ENCODE measurements at regions of chr17 and their contacts with region 1.

Region 1: GRCh38 chr17:8941520-8941919 is 24.0 kb downstream of the PIK3R5 start:
- DNase-seq: no peak

Region 2: GRCh38 chr17:7572588-7573323 is 1368.8 kb before region 1 on chr17:
- intact Hi-C with region 1: loop called in 1 of 2 experiments (anchors 10 kb)
- DNase-seq: peak; percentile 100

Region 3: DNA sequence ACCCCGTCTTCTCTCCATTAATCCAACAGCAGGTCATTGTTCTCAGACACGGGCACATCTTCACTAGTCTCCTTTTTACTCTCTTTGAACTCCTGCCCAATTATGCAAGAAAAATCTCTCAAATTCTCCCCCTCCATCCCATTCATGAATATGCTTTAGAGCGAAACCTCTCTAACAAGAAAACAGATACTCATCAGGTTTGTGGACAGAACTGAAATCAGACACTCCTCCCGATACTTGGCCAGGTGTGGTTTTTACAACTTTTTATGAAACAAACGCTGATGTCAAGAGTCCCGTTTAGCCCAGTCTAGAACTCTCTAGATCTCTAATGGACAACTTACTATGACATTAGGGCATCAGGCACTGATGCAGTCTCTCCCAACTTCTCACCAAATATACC is 16.9 kb before region 1 on chr17:
- intact Hi-C with region 1: no loop called
- DNase-seq: no peak